OCI-LY7 (cell line): ENCODE measurements at regions of chr20 and their contacts with region 1.

Region 1: DNA sequence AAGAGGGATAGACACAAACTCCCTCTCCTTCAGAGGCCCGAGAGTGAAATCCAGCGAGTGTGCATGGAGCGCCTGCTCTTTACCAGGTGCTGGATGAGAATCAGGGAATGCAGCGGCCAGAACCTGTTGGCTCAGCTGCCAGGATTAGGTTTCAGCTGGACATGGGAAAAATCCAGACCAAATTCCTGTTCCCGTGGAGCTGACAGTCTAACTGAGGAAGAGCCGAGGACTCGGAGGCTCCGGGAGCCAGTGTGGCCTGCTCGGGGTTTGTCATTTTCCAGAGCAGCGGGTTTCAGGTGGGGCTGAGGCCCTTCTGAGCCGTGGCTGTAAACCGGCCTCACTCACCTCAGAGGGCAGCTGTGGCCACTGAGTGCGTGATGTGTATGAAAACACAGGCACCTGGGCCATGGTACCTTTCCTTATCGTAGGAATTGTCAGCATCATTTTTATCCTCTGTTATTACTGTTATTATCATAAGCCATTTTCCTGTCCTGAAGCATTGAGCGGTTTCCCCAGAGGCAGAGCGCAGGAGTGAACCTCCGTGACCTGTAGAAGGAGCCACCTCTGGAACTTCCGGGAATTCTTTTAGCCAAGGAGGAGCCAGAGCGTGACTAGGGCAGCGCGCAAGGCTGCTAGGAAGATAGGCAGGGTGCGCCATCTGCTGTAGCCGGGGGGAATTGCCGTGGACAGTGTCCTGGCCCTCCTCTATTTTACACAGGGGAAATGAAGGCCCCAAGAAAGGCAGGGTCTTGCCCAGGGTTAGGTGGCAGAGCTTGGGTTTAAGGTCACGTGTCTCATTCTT is 27.3 kb downstream of the PKIG start:
- DNase-seq: peak; percentile 88
- H3K4me3 ChIP-seq: peak overlapping the region; percentile 19
- H3K27ac ChIP-seq: peak overlapping the region; percentile 86
- H3K4me1 ChIP-seq: peaks cover 45% of the 10 kb centered on the region
- CTCF ChIP-seq: peak; percentile 97

Region 2: DNA sequence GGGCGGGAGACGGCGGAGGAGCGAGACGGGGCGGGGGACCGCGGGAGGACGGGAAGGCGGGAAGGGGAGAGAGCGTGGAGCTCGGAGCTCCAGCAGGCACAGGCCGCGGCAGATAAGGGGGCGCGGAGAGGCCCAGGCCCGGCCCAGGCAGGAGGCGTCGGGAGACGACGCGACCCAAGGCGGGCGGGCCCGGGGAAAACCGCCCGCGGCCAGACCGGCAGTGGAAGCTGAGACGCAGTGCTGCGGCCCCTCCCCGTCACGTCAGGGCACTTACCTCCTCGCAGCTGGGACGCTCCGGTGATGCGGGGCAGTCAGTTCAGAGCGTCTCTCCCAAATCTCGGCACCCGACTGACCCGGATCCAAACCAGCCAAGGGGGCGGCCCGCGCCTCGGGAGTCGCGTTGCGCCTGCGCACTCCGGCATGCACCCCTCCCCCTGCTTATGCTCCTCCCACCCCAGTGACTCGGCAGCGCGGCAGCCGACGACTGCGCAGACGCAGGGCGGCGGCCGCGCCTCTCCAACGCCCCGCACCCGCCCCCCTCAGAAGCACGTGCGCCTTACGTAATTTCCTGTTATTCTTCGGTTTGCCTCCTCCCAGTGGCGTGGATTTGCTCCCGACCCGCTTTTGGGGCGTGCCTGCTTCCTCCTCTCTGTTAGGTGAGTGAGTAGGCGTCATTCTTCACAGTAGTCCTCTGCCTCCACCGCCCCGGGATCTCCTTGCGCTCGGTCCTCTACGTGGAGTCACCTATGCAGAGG is 399.1 kb before region 1 on chr20 and contains the start of gene OSER1:
- CTCF ChIA-PET with region 1: no interaction called
- POLR2A ChIA-PET with region 1: no interaction called
- intact Hi-C with region 1: loop called (anchors 2 kb)
- DNase-seq: peak; percentile 97
- H3K4me3 ChIP-seq: peak within 1 kb of the TSS; percentile 90
- H3K27ac ChIP-seq: peak within 1 kb of the TSS; percentile 81
- H3K4me1 ChIP-seq: peaks cover 24% of the 10 kb centered on the region
- CTCF ChIP-seq: no peak
- total RNA-seq, gene OSER1: 24.5 and 28.1 TPM in 2 replicates

Region 3: GRCh38 chr20:44370639-44371220 is 239.0 kb before region 1 on chr20:
- CTCF ChIA-PET with region 1: no interaction called
- POLR2A ChIA-PET with region 1: no interaction called
- intact Hi-C with region 1: no loop called
- DNase-seq: no peak
- H3K4me3 ChIP-seq: no peak overlapping the region
- H3K27ac ChIP-seq: no peak overlapping the region
- H3K4me1 ChIP-seq: no peaks in the 10 kb centered on the region
- CTCF ChIP-seq: no peak

Region 4: GRCh38 chr20:44475694-44476560 is 133.8 kb before region 1 on chr20 and contains the start of gene TTPAL:
- CTCF ChIA-PET with region 1: no interaction called
- POLR2A ChIA-PET with region 1: interaction called, 5 read pairs
- intact Hi-C with region 1: loop called (anchors 2 kb)
- DNase-seq: peak; percentile 95
- H3K4me3 ChIP-seq: peak within 1 kb of the TSS; percentile 92
- H3K27ac ChIP-seq: peak within 1 kb of the TSS; percentile 59
- H3K4me1 ChIP-seq: peaks cover 25% of the 10 kb centered on the region
- CTCF ChIP-seq: peak; percentile 46; the same call in 1 of the 2 replicates
- total RNA-seq, gene TTPAL: 3.2 and 5.6 TPM in 2 replicates

Region 5: GRCh38 chr20:44552950-44553908 is 56.5 kb before region 1 on chr20:
- CTCF ChIA-PET with region 1: no interaction called
- POLR2A ChIA-PET with region 1: no interaction called
- intact Hi-C with region 1: no loop called
- DNase-seq: no peak
- H3K4me3 ChIP-seq: no peak overlapping the region
- H3K27ac ChIP-seq: no peak overlapping the region
- H3K4me1 ChIP-seq: peaks cover 16% of the 10 kb centered on the region
- CTCF ChIP-seq: no peak

Region 6: DNA sequence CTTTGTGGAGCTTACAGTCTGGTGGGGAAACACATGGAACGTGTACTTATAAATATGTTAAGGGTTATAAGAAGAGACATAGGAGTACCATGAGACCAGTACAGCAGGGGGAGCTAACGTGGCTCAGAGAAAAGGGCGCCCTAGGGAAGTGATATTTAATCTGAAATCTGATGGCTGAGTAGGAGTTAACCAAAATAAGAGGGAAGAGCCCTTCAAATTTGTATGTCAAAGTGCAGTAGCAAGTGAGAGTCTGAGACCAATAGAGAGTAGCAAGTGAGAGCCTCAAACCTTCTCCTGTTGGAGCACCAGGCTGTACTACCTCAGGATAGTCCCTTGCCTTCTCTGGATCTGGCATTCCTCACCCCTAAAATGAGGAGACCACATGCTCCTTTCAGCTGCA is 33.4 kb before region 1 on chr20:
- CTCF ChIA-PET with region 1: interaction called, 6 read pairs
- POLR2A ChIA-PET with region 1: interaction called, 4 read pairs
- intact Hi-C with region 1: loop called (anchors 1 kb)
- DNase-seq: peak; percentile 79
- H3K4me3 ChIP-seq: no peak overlapping the region
- H3K27ac ChIP-seq: peak overlapping the region; percentile 40
- H3K4me1 ChIP-seq: peaks cover 75% of the 10 kb centered on the region
- CTCF ChIP-seq: peak; percentile 89

Region 7: GRCh38 chr20:44642203-44643153 is 32.8 kb after region 1 on chr20:
- CTCF ChIA-PET with region 1: interaction called, 4 read pairs
- POLR2A ChIA-PET with region 1: interaction called, 11 read pairs
- intact Hi-C with region 1: loop called (anchors 1 kb)
- DNase-seq: peak; percentile 65
- H3K4me3 ChIP-seq: peak overlapping the region; percentile 38
- H3K27ac ChIP-seq: peak overlapping the region; percentile 99
- H3K4me1 ChIP-seq: peaks cover 67% of the 10 kb centered on the region
- CTCF ChIP-seq: peak; percentile 68